PC-9 (cell line): ENCODE measurements at regions of chr19 and their contacts with region 1.

Region 1: DNA sequence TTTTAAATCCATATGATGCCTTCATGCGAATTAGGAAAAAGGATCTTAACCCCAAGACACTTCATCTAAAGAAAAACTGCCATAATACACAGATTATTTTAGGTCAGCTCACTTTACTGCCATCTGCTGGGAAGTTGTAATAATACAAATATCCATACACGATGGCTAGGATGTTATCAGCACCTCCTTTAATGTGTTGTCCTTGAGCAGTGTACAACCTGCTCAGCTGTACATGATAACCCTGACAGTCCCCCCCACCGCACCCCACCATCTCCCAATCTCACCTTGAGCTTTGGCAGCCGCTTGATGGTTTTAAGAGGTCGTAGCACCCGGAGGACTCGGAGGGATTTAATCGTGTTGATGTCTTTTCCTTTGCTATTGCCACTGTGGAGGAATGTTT is 112.2 kb downstream of the IER2 start:
- DNase-seq: peak in 1 of 2 experiments; percentile 47
- H3K4me3 ChIP-seq: no peak overlapping the region
- H3K27ac ChIP-seq: no peak overlapping the region
- H3K4me1 ChIP-seq: peaks cover 19% of the 10 kb centered on the region
- H3K27me3 ChIP-seq: no peaks in the 10 kb centered on the region
- CTCF ChIP-seq: peak; percentile 79

Region 2: GRCh38 chr19:12983542-12984142 is 278.8 kb before region 1 on chr19:
- CTCF ChIA-PET with region 1: no interaction called
- POLR2A ChIA-PET with region 1: interaction called, 10 read pairs
- intact Hi-C with region 1: no loop called
- DNase-seq: peak in 1 of 2 experiments; percentile 78
- H3K4me3 ChIP-seq: no peak overlapping the region; the same call in 1 of the 2 replicates
- H3K27ac ChIP-seq: no peak overlapping the region
- H3K4me1 ChIP-seq: peaks cover 15% of the 10 kb centered on the region
- H3K27me3 ChIP-seq: peaks cover 19% of the 10 kb centered on the region
- CTCF ChIP-seq: peak; percentile 97

Region 3: DNA sequence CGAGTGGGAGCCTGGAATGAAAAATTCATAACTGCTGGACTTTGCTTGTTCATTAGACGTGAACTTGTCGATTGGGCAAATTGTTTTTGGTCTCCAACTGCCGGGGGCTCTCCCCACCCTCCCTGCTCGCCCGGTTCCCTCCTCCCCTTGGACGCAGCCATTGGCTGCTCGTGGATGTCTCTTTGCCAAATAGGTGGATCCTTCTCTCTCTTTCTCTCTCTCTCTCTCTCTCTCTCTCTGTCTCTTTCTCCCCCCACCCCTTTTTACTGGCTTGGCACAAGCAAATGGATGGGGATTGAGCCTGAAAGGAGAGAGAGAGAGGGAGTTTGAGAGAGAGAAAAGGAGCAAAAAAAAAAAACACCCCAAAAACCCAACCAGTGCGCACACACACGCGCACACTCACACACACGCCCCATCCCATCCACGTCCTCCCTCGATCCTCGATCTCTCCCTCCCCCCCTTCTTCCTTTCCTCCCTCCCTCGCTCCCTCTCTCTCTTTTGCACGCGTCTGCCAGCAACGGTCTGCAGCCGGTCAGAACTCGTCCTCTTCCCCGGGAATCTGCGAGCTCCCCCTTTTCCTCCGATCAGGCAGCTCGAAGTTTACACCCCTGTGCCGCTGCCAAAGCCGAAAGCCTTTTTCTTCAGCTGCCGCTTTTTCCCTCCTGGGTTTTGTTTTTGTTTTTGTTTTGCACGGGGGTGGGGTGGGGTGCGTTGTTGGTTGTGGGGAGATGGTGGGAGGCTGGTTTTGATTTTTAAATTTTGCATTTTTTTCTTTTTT is 239.4 kb before region 1 on chr19:
- CTCF ChIA-PET with region 1: interaction called, 14 read pairs
- POLR2A ChIA-PET with region 1: no interaction called
- intact Hi-C with region 1: no loop called
- DNase-seq: no peak
- H3K4me3 ChIP-seq: no peak overlapping the region
- H3K27ac ChIP-seq: no peak overlapping the region
- H3K4me1 ChIP-seq: no peaks in the 10 kb centered on the region
- H3K27me3 ChIP-seq: peaks cover 8% of the 10 kb centered on the region; the same call in 1 of the 2 replicates
- CTCF ChIP-seq: no peak

Region 4: DNA sequence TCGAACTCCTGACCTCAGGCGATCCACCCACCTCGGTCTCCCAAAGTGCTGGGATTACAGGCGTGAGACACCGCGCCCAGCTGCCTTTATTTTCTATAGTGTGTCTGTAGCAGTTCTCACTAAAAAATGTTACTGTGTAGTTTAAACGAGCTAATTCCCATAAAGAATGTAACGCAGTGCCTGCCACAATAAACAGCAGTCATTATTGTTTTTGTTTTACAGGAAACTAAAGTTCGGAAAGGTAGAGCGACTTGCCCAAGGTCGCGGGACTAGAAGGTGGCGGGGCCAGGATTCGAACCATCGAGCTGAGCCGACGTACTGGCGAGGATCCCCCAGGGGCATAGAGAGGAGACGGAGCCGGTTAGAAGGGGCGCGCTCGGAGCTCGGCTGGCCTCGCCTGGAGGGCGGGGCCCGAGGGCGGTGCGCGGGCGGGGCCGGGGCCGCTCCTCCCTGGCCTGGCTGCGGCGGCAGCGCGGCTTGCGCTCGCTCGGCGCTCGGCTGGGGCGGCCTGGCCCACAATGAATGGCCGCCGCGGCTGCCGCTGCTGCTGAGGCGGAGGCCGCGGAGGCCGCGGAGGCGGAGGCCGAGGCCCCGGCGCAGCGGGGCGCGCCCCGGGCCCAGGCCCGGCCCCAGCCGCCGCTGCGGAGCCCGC is 144.6 kb before region 1 on chr19 and contains the start of gene NACC1:
- CTCF ChIA-PET with region 1: no interaction called
- POLR2A ChIA-PET with region 1: no interaction called
- intact Hi-C with region 1: loop called (anchors 10 kb)
- DNase-seq: peak; percentile 72 to 92
- H3K4me3 ChIP-seq: peak within 1 kb of the TSS; percentile 99
- H3K27ac ChIP-seq: peak within 1 kb of the TSS; percentile 77
- H3K4me1 ChIP-seq: peaks cover 29% of the 10 kb centered on the region
- H3K27me3 ChIP-seq: no peaks in the 10 kb centered on the region
- CTCF ChIP-seq: no peak
- total RNA-seq, gene NACC1: 101 and 133 TPM in 2 replicates

Region 5: GRCh38 chr19:13195678-13196077 is 66.8 kb before region 1 on chr19:
- CTCF ChIA-PET with region 1: interaction called, 7 read pairs
- POLR2A ChIA-PET with region 1: no interaction called
- intact Hi-C with region 1: loop called (anchors 5 kb)
- DNase-seq: peak; percentile 29 to 41
- H3K4me3 ChIP-seq: no peak overlapping the region
- H3K27ac ChIP-seq: no peak overlapping the region
- H3K4me1 ChIP-seq: peaks cover 8% of the 10 kb centered on the region
- H3K27me3 ChIP-seq: no peaks in the 10 kb centered on the region
- CTCF ChIP-seq: peak; percentile 50